Left cardiac atrium (tissue), 4 donors: ENCODE measurements at regions of chr17 and their contacts with region 1.

Region 1: DNA sequence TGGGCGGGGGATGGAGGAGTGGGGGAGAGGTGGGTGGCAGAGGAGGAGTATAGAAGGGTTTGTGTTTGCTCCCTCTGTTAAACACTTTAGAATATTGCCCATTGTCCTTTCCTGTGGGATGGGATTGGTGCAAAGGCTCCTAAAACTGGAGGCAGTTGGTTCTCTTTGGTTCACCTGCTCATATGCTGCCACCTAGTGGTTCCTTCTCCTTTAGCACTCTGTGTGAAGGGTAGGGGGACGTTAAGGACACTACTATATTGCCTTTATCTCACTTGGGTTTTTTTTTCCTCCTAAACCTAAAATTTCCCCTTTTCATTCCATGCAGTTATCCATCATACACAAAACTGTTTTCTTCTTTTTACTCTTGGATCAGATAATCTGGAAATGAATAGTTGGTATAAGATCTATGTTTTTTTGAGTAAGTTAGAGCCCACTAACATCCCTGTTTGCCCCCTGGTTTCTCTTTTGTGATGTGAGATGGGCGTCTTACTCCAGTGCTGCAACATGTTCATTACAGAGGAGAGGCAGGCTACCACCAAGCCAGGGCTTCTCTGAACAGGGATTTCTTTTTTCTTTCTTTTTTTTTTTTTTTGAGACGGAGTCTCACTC is 23.8 kb downstream of the SNX11 start:
- DNase-seq: peak; percentile 32
- ATAC-seq: peak; percentile 82 to 90

Region 2: DNA sequence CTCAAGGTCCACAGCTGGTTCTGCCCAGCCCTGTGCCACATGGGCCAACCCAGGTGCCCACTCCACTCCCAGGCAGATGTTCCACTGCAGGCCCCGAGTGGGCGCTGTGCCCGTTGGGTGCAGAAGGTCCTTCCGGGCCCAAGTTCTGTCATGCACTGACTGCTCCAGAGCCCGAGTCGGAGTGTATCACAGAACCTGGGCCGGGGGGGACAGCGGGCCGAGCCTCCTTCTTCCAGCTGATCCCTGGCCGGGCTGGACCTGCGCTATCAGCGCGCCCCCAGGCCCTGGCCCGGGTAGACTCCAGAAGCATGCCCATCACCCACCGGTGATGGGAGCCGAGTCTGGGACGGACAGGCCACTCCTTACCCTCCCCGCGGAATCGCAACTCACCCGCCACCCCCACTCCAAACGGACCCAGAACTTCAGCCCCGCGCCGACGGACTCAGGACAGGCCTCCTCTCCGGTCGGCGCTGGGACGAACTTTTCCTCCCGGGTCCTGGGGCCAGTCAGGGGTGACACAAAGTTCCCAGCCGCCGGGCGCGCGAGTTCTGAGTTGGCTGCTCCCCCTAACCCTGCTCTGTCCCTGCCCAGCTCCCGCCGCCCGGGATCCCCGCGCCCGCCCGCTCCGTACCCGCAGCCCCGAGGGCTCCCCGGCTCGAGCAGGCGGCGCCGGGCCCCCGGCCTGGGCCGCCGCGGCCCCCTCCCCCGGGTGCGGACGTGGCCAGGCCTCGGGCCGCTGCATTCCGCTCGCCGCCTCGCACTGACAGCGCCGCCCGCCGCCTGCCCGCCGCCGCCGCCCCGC is 94.1 kb before region 1 on chr17 and contains the start of gene COPZ2:
- intact Hi-C with region 1: no loop called
- DNase-seq: peak; percentile 75
- ATAC-seq: peak; percentile 88 to 89
- total RNA-seq, gene COPZ2: 50.5 to 54.0 TPM

Region 3: DNA sequence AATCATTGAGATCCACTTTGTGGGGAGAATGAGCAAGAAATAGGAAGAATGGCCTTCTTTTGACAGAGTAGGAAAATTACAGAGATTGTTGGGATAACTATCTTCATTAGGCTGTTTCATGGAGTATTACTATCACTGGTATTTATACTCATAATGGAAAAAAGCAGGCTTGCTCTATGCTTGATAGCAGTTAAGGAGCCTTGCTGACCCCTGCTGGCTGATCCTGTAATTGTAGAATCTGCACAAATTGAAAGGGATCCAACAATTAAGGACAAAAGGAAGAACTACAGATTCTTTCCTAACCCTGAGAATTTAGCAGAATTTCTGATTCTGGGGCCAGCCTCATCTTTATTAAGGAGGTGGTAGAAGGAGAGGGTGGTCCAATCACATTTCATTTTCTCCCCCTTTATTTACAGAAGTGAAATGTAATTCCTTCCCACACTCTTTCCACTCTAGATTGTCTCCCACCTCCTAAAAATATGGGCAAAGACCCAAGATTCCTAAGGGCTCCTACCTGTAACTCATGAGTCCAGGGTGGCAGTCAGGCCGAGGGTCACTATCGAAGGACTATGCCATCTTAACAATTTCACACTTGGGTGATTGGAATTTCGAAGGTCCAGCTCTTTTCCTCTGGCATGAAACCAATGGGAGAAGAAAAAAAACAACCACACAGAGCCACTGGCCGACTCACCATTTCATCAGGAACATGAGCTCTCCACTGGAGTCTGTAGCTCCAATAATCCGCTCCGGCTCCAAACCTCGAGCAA is 56.8 kb before region 1 on chr17:
- intact Hi-C with region 1: loop called in 1 of 2 experiments (anchors 5 kb)
- DNase-seq: peak; percentile 79
- ATAC-seq: peak; percentile 85 to 90